ENCODE measurements at regions of chr16 and their contacts with region 1.

Region 1: DNA sequence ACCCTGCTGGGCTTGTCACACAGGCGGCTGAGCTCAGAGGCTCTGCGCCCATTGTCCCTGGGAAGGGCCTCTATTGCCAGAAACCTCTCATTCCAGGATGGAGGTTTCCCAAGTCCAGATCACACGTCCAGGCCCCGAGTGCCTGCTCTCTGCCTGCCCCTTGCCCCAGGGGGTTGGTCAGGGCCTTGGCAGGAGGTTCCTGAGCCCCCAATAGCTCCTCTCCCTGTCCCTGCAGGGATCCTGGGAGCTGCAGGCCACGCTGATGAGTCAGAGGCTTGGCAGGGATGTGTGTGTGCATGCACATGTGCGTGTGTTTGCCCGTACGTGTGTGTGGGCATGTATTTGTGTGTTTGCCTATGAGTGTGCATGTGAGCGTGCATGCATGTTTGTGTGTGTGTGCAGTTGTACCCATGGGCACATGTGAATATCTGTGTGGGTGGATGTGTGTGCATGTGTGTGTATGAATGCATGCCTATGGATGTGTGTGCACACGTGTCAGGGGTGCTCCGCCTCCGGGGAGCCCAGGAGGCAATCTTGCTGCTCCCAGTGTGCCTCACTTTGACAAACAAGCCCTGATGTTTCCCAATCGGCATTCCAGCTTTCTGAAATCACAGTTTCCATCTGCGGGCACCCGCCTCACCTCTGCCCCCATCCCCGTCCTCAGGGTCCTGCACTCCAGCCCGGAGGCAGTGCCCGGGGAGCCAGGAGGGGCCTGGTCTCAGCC is 98.4 kb upstream of the GSE1 start:
- DNase-seq: peak; percentile 86
- H3K4me3 ChIP-seq: peak overlapping the region; percentile 29
- H3K27ac ChIP-seq: peak overlapping the region; percentile 97
- H3K27me3 ChIP-seq: no peaks in the 10 kb centered on the region
- CTCF ChIP-seq: no peak; the same call in 1 of the 2 replicates

Region 2: DNA sequence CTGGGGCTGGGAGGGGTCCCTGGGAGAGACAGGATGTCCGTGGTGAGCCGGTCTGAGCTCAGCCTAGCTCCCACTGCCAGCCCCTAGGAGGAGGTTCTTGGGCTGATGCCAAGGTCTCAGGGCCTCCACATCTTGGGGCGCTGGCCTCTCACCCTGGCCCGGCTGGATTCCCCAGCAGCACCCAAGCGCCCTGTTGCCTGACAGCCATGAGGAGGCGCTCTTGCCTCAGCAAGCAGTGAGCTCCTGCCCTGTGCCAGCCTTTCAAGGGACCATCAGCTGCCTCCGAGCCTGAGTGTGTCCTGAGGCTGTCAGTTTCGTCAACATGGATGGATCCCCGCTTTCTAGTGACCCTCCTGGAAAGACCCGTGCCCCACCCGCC is 167.6 kb before region 1 on chr16:
- CTCF ChIA-PET with region 1: no interaction called
- POLR2A ChIA-PET with region 1: no interaction called
- DNase-seq: no peak
- H3K4me3 ChIP-seq: no peak overlapping the region
- H3K27ac ChIP-seq: no peak overlapping the region
- H3K27me3 ChIP-seq: no peaks in the 10 kb centered on the region
- CTCF ChIP-seq: peak; percentile 32; the same call in 1 of the 2 replicates

Region 3: GRCh38 chr16:85445064-85445778 is 69.5 kb before region 1 on chr16:
- CTCF ChIA-PET with region 1: no interaction called
- POLR2A ChIA-PET with region 1: no interaction called
- DNase-seq: no peak
- H3K4me3 ChIP-seq: no peak overlapping the region
- H3K27ac ChIP-seq: no peak overlapping the region
- H3K27me3 ChIP-seq: no peaks in the 10 kb centered on the region
- CTCF ChIP-seq: no peak

Region 4: GRCh38 chr16:85461814-85462713 is 52.7 kb before region 1 on chr16:
- CTCF ChIA-PET with region 1: no interaction called
- POLR2A ChIA-PET with region 1: interaction called, 16 read pairs
- DNase-seq: peak; percentile 10
- H3K4me3 ChIP-seq: peak overlapping the region; percentile 15; the same call in 1 of the 2 replicates
- H3K27ac ChIP-seq: no peak overlapping the region
- H3K27me3 ChIP-seq: no peaks in the 10 kb centered on the region
- CTCF ChIP-seq: no peak